ENCODE measurements at regions of chr2 and their contacts with region 1.

Region 1: GRCh38 chr2:11129598-11130449 is 25.4 kb upstream of the SLC66A3 start:
- DNase-seq: peak; percentile 62 to 79
- ATAC-seq: no peak
- H3K4me3 ChIP-seq: peak overlapping the region in 1 of 2 donors; percentile 41
- H3K27ac ChIP-seq: no peak overlapping the region
- H3K4me1 ChIP-seq: no peaks in the 10 kb centered on the region
- H3K27me3 ChIP-seq: no peaks in the 10 kb centered on the region

Region 2: GRCh38 chr2:10977003-10977402 is 152.8 kb before region 1 on chr2:
- intact Hi-C with region 1: no loop called
- DNase-seq: no peak
- ATAC-seq: no peak
- H3K4me3 ChIP-seq: no peak overlapping the region
- H3K27ac ChIP-seq: no peak overlapping the region
- H3K4me1 ChIP-seq: no peaks in the 10 kb centered on the region
- H3K27me3 ChIP-seq: peaks cover 0 to 2% of the 10 kb centered on the region in 2 donors

Region 3: GRCh38 chr2:11154923-11155380 is 25.1 kb after region 1 on chr2:
- intact Hi-C with region 1: loop called in 1 of 2 experiments (anchors 2 kb)
- DNase-seq: peak; percentile 99
- ATAC-seq: peak; percentile 96
- H3K4me3 ChIP-seq: peak overlapping the region; percentile 9 to 76
- H3K27ac ChIP-seq: peak overlapping the region; percentile 71 to 94
- H3K4me1 ChIP-seq: no peaks in the 10 kb centered on the region
- H3K27me3 ChIP-seq: no peaks in the 10 kb centered on the region

Region 4: GRCh38 chr2:11203480-11203879 is 73.7 kb after region 1 on chr2:
- intact Hi-C with region 1: loop called in 1 of 2 experiments (anchors 10 kb)
- DNase-seq: no peak
- ATAC-seq: no peak
- H3K4me3 ChIP-seq: no peak overlapping the region
- H3K27ac ChIP-seq: no peak overlapping the region
- H3K4me1 ChIP-seq: no peaks in the 10 kb centered on the region
- H3K27me3 ChIP-seq: no peaks in the 10 kb centered on the region

Region 5: DNA sequence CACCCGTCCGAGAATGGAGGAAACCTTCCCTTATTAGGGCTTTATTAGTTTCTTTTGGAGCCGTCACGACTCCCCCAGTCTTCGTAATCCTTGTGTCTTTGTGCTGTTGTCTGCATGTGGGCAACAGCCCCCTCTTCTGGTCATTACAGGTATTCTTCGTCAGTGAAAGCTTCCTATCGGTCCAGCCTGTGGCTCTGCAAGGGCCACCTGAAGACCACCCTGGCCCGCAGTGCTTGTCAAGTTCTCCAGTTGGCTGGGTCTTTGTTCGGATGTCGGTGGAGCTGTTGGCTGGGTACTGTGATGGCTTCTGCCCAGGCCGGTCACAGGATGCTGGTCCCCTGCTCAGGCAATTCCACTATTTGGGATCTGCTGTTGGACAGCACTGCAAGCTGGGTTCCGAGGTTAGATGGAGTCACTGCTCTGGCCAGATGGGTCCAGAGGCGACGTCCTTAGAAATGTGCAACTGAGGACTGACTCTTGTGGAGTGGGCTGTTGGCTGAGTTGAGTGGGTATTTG is 317.0 kb after region 1 on chr2:
- intact Hi-C with region 1: loop called (anchors 2 to 5 kb)
- DNase-seq: peak in 1 of 2 donors; percentile 54
- ATAC-seq: peak; percentile 74
- H3K4me3 ChIP-seq: no peak overlapping the region
- H3K27ac ChIP-seq: no peak overlapping the region
- H3K4me1 ChIP-seq: no peaks in the 10 kb centered on the region
- H3K27me3 ChIP-seq: no peaks in the 10 kb centered on the region

Region 6: DNA sequence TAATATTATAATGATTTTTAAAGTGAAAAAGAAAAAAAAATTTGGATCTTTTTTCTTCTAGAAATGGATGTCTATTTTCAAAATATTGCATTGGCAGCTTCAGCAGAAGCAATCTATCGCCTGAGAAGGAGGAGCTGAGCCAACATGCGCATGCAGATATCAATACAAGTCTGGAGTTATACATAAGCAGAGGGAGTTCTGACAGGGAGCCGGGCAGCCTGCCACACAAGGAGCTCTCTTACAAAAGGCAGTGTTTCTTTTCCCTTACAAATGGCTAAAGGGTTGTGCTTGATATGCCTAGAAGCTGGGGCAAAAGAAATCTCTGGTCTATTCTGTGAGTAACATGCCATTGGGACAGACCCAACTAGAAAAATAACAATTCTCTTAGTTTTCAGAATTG is 1295.0 kb after region 1 on chr2:
- intact Hi-C with region 1: no loop called
- DNase-seq: no peak
- ATAC-seq: no peak
- H3K4me3 ChIP-seq: no peak overlapping the region
- H3K27ac ChIP-seq: no peak overlapping the region
- H3K4me1 ChIP-seq: peaks cover 1 to 5% of the 10 kb centered on the region in 2 donors
- H3K27me3 ChIP-seq: no peaks in the 10 kb centered on the region